Activated CD4-positive, alpha-beta memory T cell treated with anti-CD3 and anti-CD28 coated beads for 36 hours (primary cell): ENCODE measurements at regions of chr2 and their contacts with region 1.

Region 1: DNA sequence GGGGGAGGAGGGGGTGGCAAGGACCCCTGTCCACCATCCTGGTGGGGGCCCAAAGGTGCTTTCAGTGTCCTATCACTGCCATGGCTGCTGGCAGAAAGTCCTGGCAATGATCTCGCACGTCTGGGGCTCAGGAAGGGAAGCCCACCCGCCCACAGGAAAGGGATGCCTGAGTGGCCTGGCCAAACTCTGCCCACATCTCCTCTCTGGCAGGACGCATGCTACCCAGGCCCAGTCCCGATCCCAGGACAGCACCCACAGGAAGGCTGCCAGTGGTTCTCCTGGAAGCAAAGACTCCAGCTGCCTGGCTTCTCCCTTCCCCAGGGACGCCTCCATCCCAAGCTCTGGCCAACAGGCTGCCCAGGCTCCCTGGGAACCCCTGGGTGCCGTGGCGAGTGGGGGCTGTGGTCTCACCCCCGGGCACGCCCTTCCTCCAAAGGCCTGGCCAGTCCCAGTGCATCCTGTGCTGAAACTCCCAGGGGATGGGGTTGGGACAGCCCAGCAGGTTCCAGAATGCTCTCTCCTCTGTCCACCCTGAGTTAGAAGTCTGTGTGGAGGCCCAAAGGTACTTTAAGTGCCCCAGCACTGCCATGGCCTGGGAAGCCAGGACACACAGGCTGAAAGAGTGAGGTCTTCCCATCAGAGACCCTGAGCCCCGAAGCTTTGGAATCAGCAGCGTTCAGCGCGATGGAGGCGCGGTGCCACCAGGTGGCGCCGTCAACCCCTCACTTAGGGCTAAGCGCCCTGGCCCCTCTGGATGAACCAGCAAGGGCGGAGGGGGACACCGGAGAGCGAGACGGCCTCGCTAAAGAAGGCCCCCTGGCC is 29.8 kb upstream of the TAF1B start:
- DNase-seq: peak; percentile 80
- H3K4me3 Mint-ChIP-seq: no peak overlapping the region
- H3K27ac Mint-ChIP-seq: no peak overlapping the region
- H3K4me1 Mint-ChIP-seq: peaks cover 14% of the 10 kb centered on the region
- H3K27me3 Mint-ChIP-seq: peaks cover 5% of the 10 kb centered on the region

Region 2: DNA sequence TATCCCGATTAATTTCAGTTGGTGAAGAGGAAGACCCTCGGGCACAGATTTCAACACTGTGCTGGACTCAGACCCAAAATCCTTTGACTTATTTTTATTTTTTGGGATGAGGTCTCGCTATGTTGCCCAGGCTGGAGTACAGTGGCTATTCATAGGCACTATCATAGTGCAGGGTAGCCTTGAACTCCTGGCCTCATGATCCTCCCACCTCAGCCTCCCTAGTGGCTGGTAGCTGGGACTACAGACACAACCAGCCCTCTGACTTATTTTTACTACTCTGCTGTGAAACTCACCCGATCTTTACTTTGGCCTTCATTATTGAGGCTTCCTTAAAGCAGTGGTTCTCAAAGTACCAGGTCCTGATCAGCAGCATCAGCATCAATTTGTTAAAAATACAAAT is 239.7 kb before region 1 on chr2:
- CTCF ChIA-PET with region 1: no interaction called
- POLR2A ChIA-PET with region 1: no interaction called
- intact Hi-C with region 1: no loop called
- DNase-seq: no peak
- H3K4me3 Mint-ChIP-seq: no peak overlapping the region
- H3K27ac Mint-ChIP-seq: no peak overlapping the region
- H3K4me1 Mint-ChIP-seq: peaks cover 17% of the 10 kb centered on the region
- H3K27me3 Mint-ChIP-seq: no peaks in the 10 kb centered on the region

Region 3: DNA sequence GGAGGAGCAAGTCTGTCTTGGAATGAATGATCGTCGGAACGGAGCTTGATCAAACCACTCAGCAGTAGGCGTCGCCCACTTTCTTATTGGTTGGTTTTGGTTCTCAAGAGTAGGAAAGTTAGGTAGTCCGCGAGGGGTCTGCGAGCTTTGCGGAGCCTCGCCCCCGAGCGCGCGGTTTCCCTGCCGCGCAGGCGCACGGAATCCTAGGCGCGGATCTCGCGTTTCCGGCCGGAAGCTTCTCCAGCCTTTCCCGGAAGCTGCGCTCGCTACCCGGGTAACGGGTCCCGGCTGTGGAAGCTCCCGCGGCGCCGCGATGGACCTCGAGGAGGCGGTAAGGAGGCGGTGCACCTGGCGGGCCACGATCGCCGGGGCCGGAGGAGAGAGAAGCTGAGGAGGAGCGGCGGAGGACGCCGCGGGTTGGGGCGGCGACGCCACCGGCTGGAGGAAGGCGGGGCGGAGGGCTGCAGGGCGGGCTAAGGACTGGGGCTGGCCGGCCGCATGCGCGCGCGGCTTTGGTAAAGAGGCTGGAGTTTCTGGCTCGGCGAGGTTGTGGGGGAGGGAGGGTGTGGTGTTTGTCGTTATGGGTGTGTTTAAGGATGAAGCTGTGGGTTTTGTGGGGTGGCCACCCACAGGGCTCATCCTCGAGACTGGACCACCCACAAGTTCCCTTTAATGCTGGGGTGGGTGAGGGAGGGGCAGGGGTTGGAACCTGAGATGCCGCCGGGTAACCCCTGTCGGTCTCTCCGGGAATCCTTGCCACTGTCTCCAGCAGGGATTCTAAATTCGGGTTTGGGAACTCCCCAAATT is 29.9 kb after region 1 on chr2 and contains the start of gene TAF1B:
- CTCF ChIA-PET with region 1: interaction called, 33 read pairs
- POLR2A ChIA-PET with region 1: interaction called, 7 read pairs
- intact Hi-C with region 1: no loop called
- DNase-seq: peak; percentile 92
- H3K4me3 Mint-ChIP-seq: peak within 1 kb of the TSS; percentile 91
- H3K27ac Mint-ChIP-seq: peak within 1 kb of the TSS; percentile 89
- H3K4me1 Mint-ChIP-seq: peaks cover 42% of the 10 kb centered on the region
- H3K27me3 Mint-ChIP-seq: no peaks in the 10 kb centered on the region
- total RNA-seq, gene TAF1B: 32.6 TPM

Region 4: GRCh38 chr2:9914384-9915065 is 101.0 kb after region 1 on chr2:
- CTCF ChIA-PET with region 1: interaction called, 49 read pairs
- POLR2A ChIA-PET with region 1: no interaction called
- intact Hi-C with region 1: loop called (anchors 2 kb)
- DNase-seq: peak; percentile 83
- H3K4me3 Mint-ChIP-seq: no peak overlapping the region
- H3K27ac Mint-ChIP-seq: no peak overlapping the region
- H3K4me1 Mint-ChIP-seq: peaks cover 10% of the 10 kb centered on the region
- H3K27me3 Mint-ChIP-seq: no peaks in the 10 kb centered on the region

Region 5: DNA sequence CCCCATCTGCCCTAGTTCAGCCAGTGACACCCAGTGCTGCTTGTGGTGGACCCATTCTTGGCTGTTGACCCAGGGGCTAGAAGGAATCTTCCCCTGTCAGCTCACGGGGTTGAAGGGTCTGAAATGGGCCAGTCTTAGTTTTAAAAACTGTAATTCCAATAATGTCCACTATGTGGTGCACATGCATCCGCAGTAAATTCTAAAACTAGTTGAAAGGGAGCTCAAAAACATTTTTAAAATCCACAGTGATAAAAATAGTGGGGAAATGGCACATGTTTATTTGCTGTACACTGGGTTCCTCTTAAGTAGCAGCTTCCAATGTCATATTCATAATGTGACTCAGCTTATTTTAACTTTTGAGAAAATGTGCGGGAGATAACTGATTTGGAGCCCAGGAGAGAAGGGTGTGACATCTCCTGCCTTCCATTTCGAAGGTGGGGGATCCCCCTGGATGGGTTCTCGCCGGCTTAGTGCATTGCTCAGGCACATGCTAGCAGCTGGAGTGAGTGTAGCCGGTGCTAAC is 170.8 kb after region 1 on chr2:
- CTCF ChIA-PET with region 1: interaction called, 37 read pairs
- POLR2A ChIA-PET with region 1: no interaction called
- intact Hi-C with region 1: no loop called
- DNase-seq: peak; percentile 52
- H3K4me3 Mint-ChIP-seq: no peak overlapping the region
- H3K27ac Mint-ChIP-seq: peak overlapping the region; percentile 15
- H3K4me1 Mint-ChIP-seq: peaks cover 16% of the 10 kb centered on the region
- H3K27me3 Mint-ChIP-seq: peaks cover 5% of the 10 kb centered on the region

Region 6: GRCh38 chr2:10072656-10073480 is 259.3 kb after region 1 on chr2:
- CTCF ChIA-PET with region 1: interaction called, 13 read pairs
- POLR2A ChIA-PET with region 1: no interaction called
- intact Hi-C with region 1: no loop called
- DNase-seq: peak; percentile 86
- H3K4me3 Mint-ChIP-seq: no peak overlapping the region
- H3K27ac Mint-ChIP-seq: no peak overlapping the region
- H3K4me1 Mint-ChIP-seq: peaks cover 4% of the 10 kb centered on the region
- H3K27me3 Mint-ChIP-seq: peaks cover 37% of the 10 kb centered on the region